ENCODE measurements at regions of chr1 and their contacts with region 1.

Region 1: DNA sequence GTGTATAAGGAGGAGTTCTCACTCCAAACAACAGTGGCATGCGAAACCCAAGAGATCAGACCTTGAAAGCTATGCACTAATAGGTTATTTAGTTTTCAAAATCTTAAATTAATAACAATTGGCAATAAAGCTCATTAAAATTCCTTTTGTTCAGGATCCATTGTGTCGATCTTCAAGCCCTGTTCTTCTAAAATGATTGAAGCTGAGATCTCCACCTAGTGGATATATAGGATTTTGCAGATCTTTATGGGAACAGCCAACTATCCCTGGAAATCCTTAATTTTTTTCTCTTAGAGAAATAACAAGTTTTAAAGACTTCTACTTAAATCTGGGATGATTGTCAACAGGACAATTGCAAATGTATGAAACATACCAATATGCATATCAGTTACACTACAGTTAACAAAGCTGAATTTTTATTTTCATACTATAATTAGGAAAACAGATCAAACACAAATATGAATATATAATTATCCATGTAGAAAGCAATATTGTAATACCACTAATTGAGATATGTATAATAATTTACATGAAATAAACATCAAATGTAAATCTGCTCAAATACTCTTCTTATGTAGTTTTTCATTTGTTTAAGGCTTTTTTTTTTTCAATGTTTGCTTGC is 43.3 kb downstream of the LRRC53 start:
- DNase-seq: no peak
- ATAC-seq: no peak
- H3K4me3 Mint-ChIP-seq: no peak overlapping the region
- H3K27ac Mint-ChIP-seq: no peak overlapping the region
- H3K4me1 Mint-ChIP-seq: no peaks in the 10 kb centered on the region
- H3K27me3 Mint-ChIP-seq: peaks cover 2% of the 10 kb centered on the region

Region 2: DNA sequence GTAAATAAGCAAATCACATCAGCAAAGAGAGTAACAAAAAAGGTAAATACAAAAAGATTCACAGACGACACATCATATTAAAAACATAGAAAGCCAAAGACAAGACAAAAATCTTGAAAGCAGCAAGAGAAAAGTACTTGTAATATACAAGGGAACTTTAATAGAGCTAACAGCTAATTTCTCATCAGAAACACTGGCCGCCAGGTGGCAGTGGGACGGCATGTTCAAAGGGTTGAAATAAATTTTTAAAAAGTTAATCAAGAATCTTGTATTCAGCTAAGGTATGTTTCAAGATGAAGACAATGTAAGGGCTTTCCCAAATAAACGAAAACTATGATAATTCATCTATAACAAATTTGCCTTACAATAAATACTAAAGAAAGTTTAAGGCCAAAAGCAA is 629.2 kb before region 1 on chr1:
- CTCF ChIA-PET with region 1: no interaction called
- POLR2A ChIA-PET with region 1: no interaction called
- intact Hi-C with region 1: loop called in 1 of 2 experiments (anchors 1 kb)
- DNase-seq: peak; percentile 19
- ATAC-seq: no peak
- H3K4me3 Mint-ChIP-seq: no peak overlapping the region
- H3K27ac Mint-ChIP-seq: no peak overlapping the region
- H3K4me1 Mint-ChIP-seq: no peaks in the 10 kb centered on the region
- H3K27me3 Mint-ChIP-seq: no peaks in the 10 kb centered on the region

Region 3: DNA sequence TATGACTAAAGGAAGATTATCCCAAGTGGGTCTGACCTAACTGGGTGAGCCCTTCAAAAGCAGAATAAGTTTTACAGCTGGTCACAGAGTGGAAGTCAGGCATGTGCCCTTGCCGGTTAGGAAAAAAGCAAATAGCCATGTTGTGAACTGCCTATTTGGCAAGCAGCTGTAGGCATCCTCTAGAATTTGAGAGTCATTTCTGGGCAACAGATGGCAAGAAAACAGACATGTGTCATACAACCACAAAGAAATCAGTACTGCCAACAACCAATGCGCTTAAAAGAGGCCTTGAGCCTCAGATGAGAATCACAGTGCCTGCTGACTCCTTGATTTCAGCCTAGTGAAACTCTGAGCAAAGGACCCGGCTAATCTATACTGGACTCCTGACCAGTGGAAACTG is 16.5 kb after region 1 on chr1:
- CTCF ChIA-PET with region 1: no interaction called
- POLR2A ChIA-PET with region 1: no interaction called
- intact Hi-C with region 1: no loop called
- DNase-seq: no peak
- ATAC-seq: no peak
- H3K4me3 Mint-ChIP-seq: no peak overlapping the region
- H3K27ac Mint-ChIP-seq: no peak overlapping the region
- H3K4me1 Mint-ChIP-seq: no peaks in the 10 kb centered on the region
- H3K27me3 Mint-ChIP-seq: peaks cover 2% of the 10 kb centered on the region